Activated CD8-positive, alpha-beta T cell treated with anti-CD3 and anti-CD28 coated beads for 36 hours (primary cell): ENCODE measurements at regions of chr13 and their contacts with region 1.

Region 1: GRCh38 chr13:31742097-31742734 is 2.9 kb downstream of the RXFP2 start:
- DNase-seq: peak; percentile 72
- ATAC-seq: no peak
- H3K4me3 Mint-ChIP-seq: no peak overlapping the region
- H3K27ac Mint-ChIP-seq: no peak overlapping the region
- H3K4me1 Mint-ChIP-seq: peaks cover 2% of the 10 kb centered on the region
- H3K27me3 Mint-ChIP-seq: peaks cover 8% of the 10 kb centered on the region
- CTCF ChIP-seq: peak; percentile 92

Region 2: DNA sequence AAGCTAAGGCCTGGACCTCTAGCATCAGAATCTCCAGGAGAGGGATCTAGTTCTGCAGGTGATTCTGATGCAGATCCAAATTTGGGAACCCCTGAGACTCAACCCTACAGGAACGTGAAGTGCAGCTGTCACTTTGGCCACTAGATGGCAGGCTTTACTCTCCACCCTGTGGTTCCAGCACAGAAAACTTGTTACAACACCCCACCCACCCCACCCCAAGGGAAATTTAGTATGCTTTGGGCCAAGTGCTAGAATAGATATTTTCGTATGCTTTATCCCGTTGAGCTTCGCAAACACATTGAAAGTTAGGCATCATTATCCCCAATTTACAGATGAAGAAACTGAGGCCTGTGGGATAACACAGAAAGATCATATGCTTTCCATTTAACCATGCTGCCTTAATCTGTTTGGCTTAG is 310.5 kb before region 1 on chr13:
- CTCF ChIA-PET with region 1: interaction called, 10 read pairs
- POLR2A ChIA-PET with region 1: interaction called, 3 read pairs
- intact Hi-C with region 1: loop called (anchors 5 kb)
- DNase-seq: peak; percentile 68
- ATAC-seq: peak; percentile 49
- H3K4me3 Mint-ChIP-seq: no peak overlapping the region
- H3K27ac Mint-ChIP-seq: no peak overlapping the region
- H3K4me1 Mint-ChIP-seq: no peaks in the 10 kb centered on the region
- H3K27me3 Mint-ChIP-seq: peaks cover 3% of the 10 kb centered on the region
- CTCF ChIP-seq: peak; percentile 87